ENCODE measurements at regions of chr3 and their contacts with region 1.

Region 1: DNA sequence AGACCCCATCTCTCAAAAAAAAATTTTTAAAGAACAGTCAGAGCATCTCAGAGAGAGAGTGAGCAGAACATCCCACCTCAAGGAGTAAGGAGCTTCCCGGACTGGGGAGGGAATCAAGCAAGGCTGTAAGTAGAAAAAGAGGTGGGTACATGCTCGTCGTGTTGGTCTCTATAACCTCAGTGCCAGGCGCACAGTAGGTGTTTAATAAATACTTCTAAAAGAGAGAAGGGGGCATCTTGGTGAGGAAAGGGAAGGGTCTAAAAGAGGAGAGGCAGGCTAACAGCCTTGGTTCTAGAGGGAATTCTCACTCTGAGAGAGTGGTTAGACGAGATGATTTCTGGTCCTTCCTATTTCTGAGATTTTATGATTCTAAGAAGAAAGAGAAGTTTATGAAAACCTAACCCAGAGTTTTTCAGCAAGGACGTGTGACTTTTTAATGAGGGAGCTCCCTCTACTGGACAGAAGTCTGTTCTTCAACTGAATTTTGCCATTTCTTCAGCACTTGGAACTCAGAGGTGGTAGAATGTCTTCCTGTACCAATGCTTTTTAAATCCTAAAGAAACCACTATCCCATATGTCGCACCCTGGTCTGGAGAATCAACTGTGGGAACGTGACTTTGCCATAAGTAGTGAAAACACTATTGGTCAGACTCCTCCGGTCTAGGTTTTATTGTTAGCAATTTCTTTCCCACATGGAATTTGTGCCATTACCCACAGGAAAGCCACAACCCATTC is 199.7 kb upstream of the LMCD1 start:
- DNase-seq: peak in 7 of 9 donors; percentile 16 to 56 (median 44)
- ATAC-seq: peak; percentile 50
- H3K4me3 ChIP-seq: no peak overlapping the region
- H3K4me3 Mint-ChIP-seq: no peak overlapping the region
- H3K27ac ChIP-seq: no peak overlapping the region
- H3K27ac Mint-ChIP-seq: peak overlapping the region in 5 of 9 donors; percentile 10 to 63 (median 37)
- H3K4me1 ChIP-seq: no peaks in the 10 kb centered on the region
- H3K4me1 Mint-ChIP-seq: peaks cover 0 to 15% (median 7%) of the 10 kb centered on the region in 7 donors
- H3K27me3 ChIP-seq: no peaks in the 10 kb centered on the region
- H3K27me3 Mint-ChIP-seq: peaks cover 0 to 4% (median 0%) of the 10 kb centered on the region in 5 donors

Region 2: DNA sequence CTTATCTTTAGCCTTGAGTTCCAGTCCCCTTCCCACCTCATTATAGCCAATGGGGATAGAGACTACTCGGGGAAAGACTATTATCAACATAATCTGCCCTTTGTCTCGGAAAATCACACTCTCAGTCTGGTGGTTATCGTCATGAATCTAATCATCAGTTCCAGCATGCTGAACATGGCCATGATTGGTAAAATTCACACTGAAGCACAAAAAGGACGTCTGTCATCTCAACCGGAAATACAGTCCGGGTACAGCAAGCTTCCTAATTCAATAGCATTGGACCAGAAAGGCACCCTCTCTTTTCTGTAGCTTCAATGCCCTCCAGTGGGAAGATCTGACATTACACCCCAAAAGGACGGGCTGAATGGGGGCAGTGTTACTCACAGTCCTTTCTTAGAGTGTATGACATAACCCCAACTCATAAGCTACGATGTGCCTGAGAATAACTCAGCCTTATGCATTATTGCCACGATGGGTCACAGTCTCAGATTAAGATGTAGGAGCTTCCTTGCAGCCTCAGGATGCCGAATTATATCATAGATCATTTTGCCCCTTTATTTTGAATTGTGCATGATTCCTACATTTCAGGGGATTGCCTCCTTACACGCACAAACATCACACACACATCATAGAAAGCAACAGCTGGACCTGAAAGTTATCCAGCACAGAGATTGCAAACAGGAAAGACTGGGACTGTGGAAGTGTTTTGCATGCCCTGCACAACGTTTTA is 190.7 kb before region 1 on chr3:
- CTCF ChIA-PET with region 1: no interaction called
- POLR2A ChIA-PET with region 1: no interaction called
- intact Hi-C with region 1: loop called in 1 of 2 experiments (anchors 1 kb)
- DNase-seq: peak in 8 of 9 donors; percentile 29 to 68 (median 55)
- ATAC-seq: peak; percentile 84
- H3K4me3 ChIP-seq: no peak overlapping the region
- H3K4me3 Mint-ChIP-seq: peak overlapping the region in 8 of 10 donors; percentile 39 to 76 (median 54)
- H3K27ac ChIP-seq: no peak overlapping the region
- H3K27ac Mint-ChIP-seq: no peak overlapping the region
- H3K4me1 ChIP-seq: peaks cover 0 to 5% of the 10 kb centered on the region in 2 donors
- H3K4me1 Mint-ChIP-seq: peaks cover 0 to 7% (median 4%) of the 10 kb centered on the region in 7 donors
- H3K27me3 ChIP-seq: no peaks in the 10 kb centered on the region
- H3K27me3 Mint-ChIP-seq: peaks cover 0 to 10% (median 6%) of the 10 kb centered on the region in 5 donors

Region 3: GRCh38 chr3:8239718-8240695 is 61.9 kb before region 1 on chr3:
- CTCF ChIA-PET with region 1: interaction called, 3 read pairs
- POLR2A ChIA-PET with region 1: no interaction called
- intact Hi-C with region 1: loop called in 1 of 2 experiments (anchors 1 kb)
- DNase-seq: peak in 6 of 9 donors; percentile 5 to 29 (median 15)
- ATAC-seq: peak; percentile 64
- H3K4me3 ChIP-seq: no peak overlapping the region
- H3K4me3 Mint-ChIP-seq: no peak overlapping the region
- H3K27ac ChIP-seq: no peak overlapping the region
- H3K27ac Mint-ChIP-seq: no peak overlapping the region
- H3K4me1 ChIP-seq: no peaks in the 10 kb centered on the region
- H3K4me1 Mint-ChIP-seq: no peaks in the 10 kb centered on the region
- H3K27me3 ChIP-seq: no peaks in the 10 kb centered on the region
- H3K27me3 Mint-ChIP-seq: peaks cover 0 to 4% (median 0%) of the 10 kb centered on the region in 5 donors

Measured in naive thymus-derived CD4-positive, alpha-beta T cell (primary cell).